Dorsolateral prefrontal cortex (tissue), 120 donors: ENCODE measurements at regions of chr3 and their contacts with region 1.

Region 1: DNA sequence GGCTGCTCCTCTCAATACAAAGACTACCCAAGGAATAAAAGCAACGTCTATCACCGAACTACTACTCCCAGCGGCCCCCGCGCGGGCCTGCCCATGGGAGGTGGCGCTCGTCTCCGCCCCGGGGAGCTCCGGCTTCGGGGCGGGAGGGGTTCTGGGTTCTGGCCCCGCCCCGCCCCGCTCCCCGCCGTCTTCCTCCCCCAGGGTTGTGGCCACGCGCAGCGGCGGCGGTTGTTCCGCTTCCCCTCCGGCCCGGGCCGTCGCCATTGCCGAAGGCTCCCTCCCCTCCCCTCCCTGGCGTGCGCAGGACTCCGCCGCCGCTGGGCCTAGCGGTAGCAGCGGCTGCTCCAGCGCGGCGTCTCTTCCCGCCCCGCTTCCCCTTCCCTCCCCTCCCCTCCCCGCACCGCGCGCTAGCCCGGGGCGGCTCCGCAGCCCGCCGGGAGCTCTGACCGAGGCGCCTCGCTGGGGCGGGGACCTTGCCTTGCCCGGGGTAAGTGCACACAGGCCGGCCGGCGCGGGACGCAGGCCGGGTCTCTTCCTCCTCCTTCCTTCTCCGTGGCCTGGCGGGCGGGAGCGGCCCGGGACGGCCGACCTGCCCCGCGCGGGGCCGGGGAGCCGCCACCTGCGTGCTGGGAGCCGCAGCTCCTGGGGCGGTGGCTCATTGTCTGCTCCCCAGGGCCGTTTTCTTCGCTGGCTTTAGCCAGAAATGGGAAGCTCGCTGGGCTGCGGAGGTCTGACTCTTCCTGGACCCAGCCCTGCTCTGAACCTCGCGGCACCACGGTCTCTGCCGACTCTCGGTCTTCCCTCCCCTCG is at the start of gene PAK2:
- DNase-seq: peak; percentile 91 to 95 (median 94)
- H3K4me3 ChIP-seq: peak within 1 kb of the TSS; percentile 47 to 99 (median 92)
- H3K27ac ChIP-seq: peak within 1 kb of the TSS; percentile 63 to 98 (median 96)
- H3K27me3 ChIP-seq: no peaks in the 10 kb centered on the region
- CTCF ChIP-seq: peak in 55 of 56 donors; percentile 22 to 79 (median 59)
- total RNA-seq, gene PAK2: 28.1 to 67.1 (median 44.9) TPM

Region 2: GRCh38 chr3:196711838-196712513 is 27.9 kb before region 1 on chr3 and contains the starts of genes CEP19 and PIGX:
- intact Hi-C with region 1: loop called in 1 of 2 experiments (anchors 2 kb)
- DNase-seq: peak; percentile 78 to 95 (median 86)
- H3K4me3 ChIP-seq: peak within 1 kb of the TSS; percentile 61 to 98 (median 90)
- H3K27ac ChIP-seq: peak within 1 kb of the TSS; percentile 39 to 97 (median 90)
- H3K27me3 ChIP-seq: no peaks in the 10 kb centered on the region
- CTCF ChIP-seq: peak in 40 of 56 donors; percentile 8 to 65 (median 32)
- total RNA-seq, gene CEP19: 2.8 to 14.6 (median 8.6) TPM
- total RNA-seq, gene PIGX: 23.5 to 51.0 (median 37.0) TPM

Region 3: GRCh38 chr3:196849180-196849741 is 109.4 kb after region 1 on chr3:
- intact Hi-C with region 1: no loop called
- DNase-seq: no peak
- H3K4me3 ChIP-seq: no peak overlapping the region
- H3K27ac ChIP-seq: no peak overlapping the region
- H3K27me3 ChIP-seq: no peaks in the 10 kb centered on the region
- CTCF ChIP-seq: no peak